ENCODE measurements at regions of chr9 and their contacts with region 1.

Region 1: DNA sequence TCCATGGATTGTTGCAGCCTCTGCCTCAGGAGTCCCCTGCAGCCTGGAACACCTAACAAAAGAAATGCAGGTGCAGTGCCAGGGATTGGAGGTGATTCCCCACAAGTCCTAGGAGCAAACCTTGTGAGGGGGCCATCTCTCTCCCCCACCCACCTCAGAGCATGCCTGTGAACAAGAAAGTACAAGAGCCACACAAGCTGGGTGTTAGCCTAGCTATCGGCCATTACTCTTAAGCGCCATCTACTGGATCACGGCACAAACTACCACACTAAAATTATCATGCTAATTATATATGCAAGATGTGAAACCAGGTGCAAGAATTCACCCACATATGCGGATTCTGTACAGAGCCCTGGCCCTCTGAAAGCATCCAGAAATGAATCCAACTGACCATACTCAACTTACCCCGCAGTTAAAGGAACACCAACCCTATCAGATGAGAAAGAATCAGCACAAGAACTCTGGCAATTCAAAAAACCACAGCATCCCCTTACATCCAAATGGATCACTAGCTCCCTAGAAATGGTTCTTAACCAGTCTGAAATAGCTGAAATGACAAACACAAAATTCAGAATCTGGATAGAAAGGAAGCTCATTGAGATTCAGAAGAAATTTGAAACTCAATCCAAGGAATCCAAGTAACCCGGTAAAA is 16.5 kb upstream of the PRSS3 start:
- DNase-seq: peak in 34 of 35 experiments; percentile 1 to 77 (median 30)
- ATAC-seq: peak; percentile 69 to 83 (median 78)
- H3K4me3 ChIP-seq: no peak overlapping the region
- H3K4me3 Mint-ChIP-seq: no peak overlapping the region
- H3K27ac ChIP-seq: no peak overlapping the region
- H3K27ac Mint-ChIP-seq: no peak overlapping the region
- H3K4me1 ChIP-seq: no peaks in the 10 kb centered on the region
- H3K4me1 Mint-ChIP-seq: peaks cover 0 to 3% (median 2%) of the 10 kb centered on the region in 3 donors
- H3K27me3 ChIP-seq: peaks cover 0 to 4% of the 10 kb centered on the region in 2 experiments
- H3K27me3 Mint-ChIP-seq: peaks cover 5 to 10% of the 10 kb centered on the region in 2 donors

Region 2: DNA sequence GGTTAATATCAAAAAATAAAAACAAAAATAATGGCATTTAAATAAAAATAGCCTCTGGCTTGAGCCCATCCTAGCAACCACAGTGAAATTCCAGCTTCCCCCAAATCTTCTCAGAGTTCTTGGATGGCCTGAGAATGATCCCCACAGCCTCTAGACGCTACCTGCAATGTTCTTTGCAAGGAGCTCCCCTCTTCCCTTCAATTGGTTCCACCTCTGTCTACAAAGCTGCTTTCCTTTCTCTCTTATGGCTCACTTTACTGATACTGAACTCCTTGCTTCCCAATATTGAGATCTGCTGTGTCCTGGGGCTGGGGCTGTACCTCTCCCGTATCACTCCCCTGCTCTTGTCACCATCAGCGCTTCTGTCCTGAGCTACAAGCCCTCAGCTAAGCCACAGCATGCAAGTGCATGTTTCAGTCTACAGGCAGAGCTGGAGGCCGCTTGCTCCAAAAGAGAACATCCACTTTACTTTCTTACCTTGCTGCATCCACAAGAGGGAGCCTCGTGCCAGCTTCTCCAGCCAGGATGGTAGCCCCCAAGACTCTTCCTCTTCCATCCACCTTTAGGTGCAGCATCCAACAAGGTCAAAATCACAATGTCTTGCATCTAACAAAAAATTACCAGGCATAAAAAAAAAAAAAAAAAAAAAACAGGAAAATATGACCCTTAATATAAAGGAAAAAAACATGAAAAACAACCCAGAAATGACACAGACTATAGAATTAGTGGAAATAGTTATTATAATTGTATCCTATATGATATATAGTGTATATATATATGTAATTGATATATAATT is 40.8 kb before region 1 on chr9:
- CTCF ChIA-PET with region 1: interaction called in 1 of 2 experiments, 16 read pairs
- POLR2A ChIA-PET with region 1: no interaction called
- DNase-seq: peak in 1 of 35 experiments; percentile 37
- ATAC-seq: no peak
- H3K4me3 ChIP-seq: no peak overlapping the region
- H3K4me3 Mint-ChIP-seq: no peak overlapping the region
- H3K27ac ChIP-seq: no peak overlapping the region
- H3K27ac Mint-ChIP-seq: no peak overlapping the region
- H3K4me1 ChIP-seq: no peaks in the 10 kb centered on the region
- H3K4me1 Mint-ChIP-seq: no peaks in the 10 kb centered on the region
- H3K27me3 ChIP-seq: peaks cover 0 to 15% of the 10 kb centered on the region in 2 experiments
- H3K27me3 Mint-ChIP-seq: peaks cover 26 to 51% of the 10 kb centered on the region in 2 donors